Testis (tissue), 5 donors: ENCODE measurements at regions of chr16 and their contacts with region 1.

Region 1: DNA sequence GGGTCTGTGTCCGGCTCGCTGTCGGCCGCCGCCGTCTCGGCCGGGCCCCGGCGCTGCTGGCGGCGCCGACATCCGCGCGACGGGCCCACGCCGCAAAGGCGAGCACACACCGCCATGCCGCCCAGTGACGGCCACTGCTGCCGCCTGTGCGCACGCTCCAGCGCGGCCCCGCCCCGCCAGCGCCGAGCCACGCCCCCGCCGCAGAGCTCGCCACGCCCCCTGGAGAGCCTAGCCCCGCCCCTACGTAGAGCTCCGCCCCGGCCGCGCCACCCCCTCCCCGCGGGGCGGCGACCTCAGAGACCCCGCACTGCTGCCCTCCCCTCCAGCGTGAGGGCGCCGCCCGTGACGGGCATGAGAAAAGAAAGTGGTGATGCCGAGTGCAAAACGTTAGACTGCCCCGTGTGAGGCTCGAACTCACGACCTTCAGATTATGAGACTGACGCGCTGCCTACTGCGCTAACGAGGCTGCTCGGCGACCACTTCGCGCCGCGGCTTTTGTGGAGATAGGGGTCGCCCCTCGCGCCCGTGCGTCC is at the start of gene FBXO31:
- DNase-seq: peak; percentile 90
- H3K4me3 ChIP-seq: peak within 1 kb of the TSS; percentile 78 to 80
- H3K27ac ChIP-seq: peak within 1 kb of the TSS; percentile 90 to 95
- H3K4me1 ChIP-seq: peaks cover 43% of the 10 kb centered on the region
- H3K27me3 ChIP-seq: no peaks in the 10 kb centered on the region
- CTCF ChIP-seq: no peak
- POLR2A ChIP-seq: peak; percentile 88
- total RNA-seq, gene FBXO31: 115 to 215 TPM

Region 2: DNA sequence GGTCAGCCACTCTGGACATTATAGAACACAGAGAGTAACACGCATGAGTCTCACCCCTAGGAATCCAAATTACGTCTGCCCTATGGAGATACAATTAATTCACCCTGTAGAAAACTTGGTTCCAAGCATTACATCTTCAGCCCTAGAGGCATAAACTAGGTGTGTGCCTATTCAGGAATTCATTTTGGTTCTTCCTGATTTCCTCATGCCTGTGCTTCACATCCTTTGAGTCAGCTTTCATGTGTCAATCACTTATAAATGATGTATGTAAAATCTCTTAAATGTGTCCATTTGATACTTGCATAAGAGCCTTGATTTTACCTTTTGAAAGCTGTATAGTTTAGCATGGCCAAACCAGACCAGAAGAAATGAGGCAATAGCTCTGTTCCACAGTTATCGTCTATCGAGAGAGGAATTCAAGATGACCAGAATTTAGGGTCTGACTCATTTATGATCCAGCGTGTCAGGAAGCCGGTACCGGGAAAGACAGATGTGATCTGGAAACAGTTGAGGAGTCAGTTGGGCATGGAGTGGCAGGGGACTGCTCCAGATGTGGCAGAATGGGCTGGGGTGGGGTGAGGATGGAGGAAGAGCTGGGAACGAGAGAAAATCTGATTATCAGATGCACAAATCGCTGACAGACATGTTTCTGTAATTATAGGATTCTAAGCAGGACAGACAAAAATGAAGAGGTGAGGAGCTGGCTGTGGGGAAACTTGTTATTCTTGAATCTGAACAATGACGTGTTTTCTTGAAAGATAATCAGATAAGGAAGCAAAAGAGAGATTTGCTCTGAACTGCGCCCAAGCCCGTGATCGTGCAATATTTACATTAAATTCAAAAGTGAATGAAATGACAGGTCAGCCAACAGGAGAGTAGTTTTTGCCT is 143.2 kb before region 1 on chr16:
- intact Hi-C with region 1: no loop called
- DNase-seq: no peak
- H3K4me3 ChIP-seq: no peak overlapping the region
- H3K27ac ChIP-seq: no peak overlapping the region
- H3K4me1 ChIP-seq: no peaks in the 10 kb centered on the region
- H3K27me3 ChIP-seq: no peaks in the 10 kb centered on the region
- CTCF ChIP-seq: no peak
- POLR2A ChIP-seq: no peak

Region 3: GRCh38 chr16:87316923-87317749 is 66.6 kb before region 1 on chr16 and contains the start of gene C16orf95:
- intact Hi-C with region 1: loop called (anchors 5 kb)
- DNase-seq: peak; percentile 98
- H3K4me3 ChIP-seq: peak within 1 kb of the TSS; percentile 86 to 98
- H3K27ac ChIP-seq: peak within 1 kb of the TSS; percentile 89 to 94
- H3K4me1 ChIP-seq: peaks cover 9% of the 10 kb centered on the region
- H3K27me3 ChIP-seq: no peaks in the 10 kb centered on the region
- CTCF ChIP-seq: peak; percentile 38 to 59 (median 58)
- POLR2A ChIP-seq: no peak
- total RNA-seq, gene C16orf95: 53.1 to 71.9 TPM

Region 4: GRCh38 chr16:87326151-87326571 is 57.5 kb before region 1 on chr16:
- intact Hi-C with region 1: loop called (anchors 2 kb)
- DNase-seq: no peak
- H3K4me3 ChIP-seq: no peak overlapping the region
- H3K27ac ChIP-seq: no peak overlapping the region
- H3K4me1 ChIP-seq: no peaks in the 10 kb centered on the region
- H3K27me3 ChIP-seq: no peaks in the 10 kb centered on the region
- CTCF ChIP-seq: no peak
- POLR2A ChIP-seq: no peak